Motor neuron (in vitro differentiated cells): ENCODE measurements at regions of chr2 and their contacts with region 1.

Region 1: DNA sequence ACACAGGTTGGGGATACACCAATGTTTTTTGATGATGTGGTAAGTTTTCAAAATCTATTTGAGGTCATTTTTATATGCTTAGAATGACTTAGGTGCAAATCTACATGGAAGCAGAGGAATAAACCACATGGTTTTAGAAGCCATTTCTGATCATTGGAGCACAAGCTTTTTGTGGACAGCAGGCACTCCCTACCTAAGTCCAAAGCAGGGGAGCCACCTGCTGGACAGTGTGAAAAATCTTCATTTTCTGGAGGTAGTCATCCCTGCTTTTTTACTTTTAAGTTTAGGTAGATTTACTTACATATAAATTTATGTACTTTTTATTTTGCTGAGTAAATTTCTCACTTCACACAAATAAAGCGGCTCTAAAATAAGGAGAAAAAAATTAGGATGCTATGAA is 323.2 kb downstream of the PLCL1 start:
- ATAC-seq: peak in 4 of 8 experiments; percentile 28 to 76 (median 69)
- H3K4me3 ChIP-seq: no peak overlapping the region
- H3K27ac ChIP-seq: no peak overlapping the region
- H3K4me1 ChIP-seq: no peaks in the 10 kb centered on the region

Region 2: GRCh38 chr2:198214114-198214596 is 86.5 kb after region 1 on chr2:
- in situ Hi-C with region 1: no loop called
- ATAC-seq: peak in 6 of 8 experiments; percentile 21 to 87 (median 58)
- H3K4me3 ChIP-seq: no peak overlapping the region
- H3K27ac ChIP-seq: peak overlapping the region; percentile 66 to 69
- H3K4me1 ChIP-seq: peaks cover 17 to 19% of the 10 kb centered on the region in 2 donors

Region 3: GRCh38 chr2:198273660-198274059 is 146.0 kb after region 1 on chr2:
- in situ Hi-C with region 1: loop called in 2 of 9 experiments (anchors 25 kb)
- ATAC-seq: peak in 6 of 8 experiments; percentile 29 to 85 (median 58)
- H3K4me3 ChIP-seq: no peak overlapping the region
- H3K27ac ChIP-seq: no peak overlapping the region
- H3K4me1 ChIP-seq: peaks cover 3 to 8% of the 10 kb centered on the region in 2 donors

Region 4: GRCh38 chr2:198296665-198297308 is 169.2 kb after region 1 on chr2:
- in situ Hi-C with region 1: loop called in 1 of 9 experiments (anchors 25 kb)
- ATAC-seq: peak; percentile 82 to 100 (median 98)
- H3K4me3 ChIP-seq: no peak overlapping the region
- H3K27ac ChIP-seq: no peak overlapping the region
- H3K4me1 ChIP-seq: no peaks in the 10 kb centered on the region